A549 (cell line): ENCODE measurements at regions of chrX and their contacts with region 1.

Region 1: DNA sequence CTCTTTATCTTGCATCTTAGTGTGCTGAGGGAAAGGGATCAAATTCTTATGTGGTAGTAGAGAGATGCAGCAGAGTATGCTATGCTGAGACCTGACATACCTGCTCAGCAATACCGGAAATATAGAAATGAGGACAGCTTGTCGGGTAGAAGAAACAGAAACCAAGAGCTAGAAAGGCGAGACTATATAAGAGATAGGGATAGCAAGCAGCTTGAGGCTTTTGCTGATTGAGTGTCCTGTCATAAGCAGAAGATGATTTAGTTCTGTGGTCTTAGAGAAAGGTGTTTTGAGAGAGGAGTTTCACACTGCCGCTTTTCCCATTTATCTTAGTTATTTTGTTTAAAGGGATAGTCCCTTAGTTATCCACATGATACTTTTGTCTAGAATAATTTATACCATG is 31.7 kb downstream of the USP9X start:
- DNase-seq: no peak
- ATAC-seq: no peak
- H3K4me3 ChIP-seq: no peak overlapping the region
- H3K27ac ChIP-seq: no peak overlapping the region
- H3K4me1 ChIP-seq: peaks cover 53% of the 10 kb centered on the region
- CTCF ChIP-seq: no peak
- EP300 ChIP-seq: no peak
- POLR2A ChIP-seq: no peak
- RAD21 ChIP-seq: no peak

Region 2: DNA sequence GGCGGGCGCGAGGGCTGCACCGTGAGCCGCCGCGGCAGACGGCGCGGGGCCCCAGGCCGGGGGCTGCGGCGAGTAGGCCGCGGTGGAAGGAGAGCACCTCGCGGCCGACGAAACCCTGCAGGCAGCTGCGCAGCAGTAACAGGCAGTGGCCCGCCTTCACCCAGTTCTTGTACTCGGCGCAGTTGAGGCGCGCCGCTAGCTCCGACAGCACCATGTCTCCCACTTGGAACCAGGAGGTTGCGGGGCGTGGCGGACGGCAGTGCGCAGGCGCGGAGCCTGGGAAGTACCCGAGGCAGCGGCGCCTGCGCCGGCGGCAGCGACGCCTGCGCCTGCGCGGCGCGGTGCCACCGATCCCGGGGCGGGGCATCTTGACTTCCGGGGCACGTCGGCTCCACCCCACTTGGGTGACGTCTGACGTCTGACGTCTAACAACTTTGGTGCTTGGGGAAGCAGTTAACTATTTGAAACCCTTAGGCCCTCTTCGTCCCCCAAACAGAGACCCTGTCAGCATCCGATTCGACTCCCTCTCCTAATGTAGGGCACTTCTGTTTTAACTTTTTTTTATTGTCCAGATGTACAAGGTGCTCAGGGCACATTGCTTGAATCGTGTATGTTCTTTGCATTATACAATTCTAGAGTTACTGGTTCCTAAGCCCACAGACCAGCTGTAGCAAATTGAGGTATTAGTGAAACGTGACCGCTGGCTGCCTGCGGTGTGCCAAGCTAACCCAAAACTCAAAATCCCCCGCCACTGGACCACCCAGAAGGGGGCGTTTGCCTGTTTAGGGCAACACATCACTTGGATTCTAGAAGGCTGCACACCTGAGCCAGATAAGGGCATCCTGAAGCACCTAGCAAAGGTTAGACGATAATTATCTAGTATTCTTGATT is 469.4 kb before region 1 on chrX and contains the start of gene CXorf38:
- CTCF ChIA-PET with region 1: interaction called, 13 read pairs
- POLR2A ChIA-PET with region 1: no interaction called
- DNase-seq: peak; percentile 69 to 91
- ATAC-seq: peak; percentile 84 to 92
- H3K4me3 ChIP-seq: peak within 1 kb of the TSS; percentile 97
- H3K27ac ChIP-seq: peak within 1 kb of the TSS; percentile 86 to 96
- H3K4me1 ChIP-seq: peaks cover 19% of the 10 kb centered on the region
- CTCF ChIP-seq: no peak
- EP300 ChIP-seq: no peak
- POLR2A ChIP-seq: peak; percentile 65
- RAD21 ChIP-seq: no peak
- polyA plus RNA-seq, gene CXorf38: 12.5 and 14.3 TPM in 2 replicates

Region 3: DNA sequence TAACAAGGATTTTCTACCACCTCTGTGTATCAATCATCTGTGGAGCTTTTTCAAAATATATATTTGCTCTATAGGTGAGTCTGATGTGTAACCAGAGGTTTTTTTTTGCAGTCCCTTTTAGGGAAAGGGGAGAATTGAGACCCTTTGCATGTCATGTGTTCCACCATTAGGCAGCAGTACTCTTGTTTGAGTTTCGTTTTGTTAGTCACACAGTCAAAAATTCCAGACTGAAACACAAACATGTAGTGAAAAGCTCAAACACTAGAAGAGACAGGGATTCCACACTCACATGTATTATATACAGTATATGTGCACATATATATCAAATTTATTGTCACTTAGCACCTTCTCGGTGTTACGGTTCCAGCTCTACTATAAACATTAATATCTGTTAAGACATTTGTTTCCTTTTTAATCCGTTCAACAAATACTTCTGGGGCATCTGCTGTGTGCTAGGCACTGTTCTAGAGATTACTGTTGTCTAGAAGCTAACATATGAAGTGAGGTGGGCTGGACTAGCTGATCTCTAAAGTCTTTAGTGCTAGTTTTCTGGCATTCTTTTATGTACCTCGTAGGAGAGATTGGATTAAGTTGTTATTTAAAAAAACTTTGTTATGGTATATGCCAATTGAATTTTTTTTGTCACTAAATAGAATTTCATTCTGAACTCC is 26.2 kb before region 1 on chrX:
- CTCF ChIA-PET with region 1: interaction called, 10 read pairs
- POLR2A ChIA-PET with region 1: no interaction called
- DNase-seq: no peak
- ATAC-seq: no peak
- H3K4me3 ChIP-seq: peak overlapping the region; percentile 28
- H3K27ac ChIP-seq: 0 out of 6 replicates have a peak overlapping the region, but pooled peaks of 1 of the 2 experiments have one; percentile 48
- H3K4me1 ChIP-seq: peaks cover 59% of the 10 kb centered on the region
- CTCF ChIP-seq: no peak
- EP300 ChIP-seq: no peak
- POLR2A ChIP-seq: no peak
- RAD21 ChIP-seq: no peak

Region 4: DNA sequence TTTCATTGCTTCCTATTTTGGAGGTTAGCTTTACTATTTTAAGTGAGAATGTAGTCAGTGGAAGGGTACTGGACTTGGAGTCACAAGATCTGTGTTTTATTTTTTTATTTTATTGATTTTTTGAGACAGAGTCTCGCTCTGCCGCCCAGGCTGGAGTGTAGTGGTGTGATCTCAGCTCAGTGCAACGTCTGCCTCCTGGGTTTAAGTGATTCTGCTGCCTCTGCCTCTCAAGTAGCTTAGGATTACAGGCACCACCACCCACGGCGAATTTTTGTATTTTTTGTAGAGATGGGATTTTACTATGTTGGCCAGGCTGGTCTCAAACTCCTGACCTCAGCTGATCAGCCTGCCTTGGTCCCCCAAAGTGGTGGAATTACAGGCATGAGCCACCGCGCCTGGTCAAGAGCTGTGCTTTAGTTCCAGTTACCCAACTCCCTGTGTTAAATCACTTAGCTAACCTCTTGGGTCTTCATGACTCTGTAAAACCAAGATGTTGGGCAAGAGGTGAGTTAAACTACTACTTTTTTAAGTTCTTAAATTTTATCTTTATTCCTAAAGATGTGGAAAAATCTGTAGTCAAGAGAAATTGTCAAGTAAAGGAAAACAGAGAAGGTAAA is 20.5 kb before region 1 on chrX:
- CTCF ChIA-PET with region 1: interaction called, 10 read pairs
- POLR2A ChIA-PET with region 1: no interaction called
- DNase-seq: no peak
- ATAC-seq: no peak
- H3K4me3 ChIP-seq: no peak overlapping the region
- H3K27ac ChIP-seq: 0 out of 6 replicates have a peak overlapping the region, but pooled peaks of 1 of the 2 experiments have one; percentile 24
- H3K4me1 ChIP-seq: peaks cover 49% of the 10 kb centered on the region
- CTCF ChIP-seq: no peak
- EP300 ChIP-seq: no peak
- POLR2A ChIP-seq: no peak
- RAD21 ChIP-seq: no peak

Region 5: GRCh38 chrX:41105005-41105404 is 11.9 kb before region 1 on chrX:
- CTCF ChIA-PET with region 1: interaction called, 20 read pairs
- POLR2A ChIA-PET with region 1: no interaction called
- DNase-seq: no peak
- ATAC-seq: no peak
- H3K4me3 ChIP-seq: no peak overlapping the region
- H3K27ac ChIP-seq: no peak overlapping the region
- H3K4me1 ChIP-seq: peaks cover 29% of the 10 kb centered on the region
- CTCF ChIP-seq: no peak
- EP300 ChIP-seq: no peak
- POLR2A ChIP-seq: no peak
- RAD21 ChIP-seq: no peak

Region 6: DNA sequence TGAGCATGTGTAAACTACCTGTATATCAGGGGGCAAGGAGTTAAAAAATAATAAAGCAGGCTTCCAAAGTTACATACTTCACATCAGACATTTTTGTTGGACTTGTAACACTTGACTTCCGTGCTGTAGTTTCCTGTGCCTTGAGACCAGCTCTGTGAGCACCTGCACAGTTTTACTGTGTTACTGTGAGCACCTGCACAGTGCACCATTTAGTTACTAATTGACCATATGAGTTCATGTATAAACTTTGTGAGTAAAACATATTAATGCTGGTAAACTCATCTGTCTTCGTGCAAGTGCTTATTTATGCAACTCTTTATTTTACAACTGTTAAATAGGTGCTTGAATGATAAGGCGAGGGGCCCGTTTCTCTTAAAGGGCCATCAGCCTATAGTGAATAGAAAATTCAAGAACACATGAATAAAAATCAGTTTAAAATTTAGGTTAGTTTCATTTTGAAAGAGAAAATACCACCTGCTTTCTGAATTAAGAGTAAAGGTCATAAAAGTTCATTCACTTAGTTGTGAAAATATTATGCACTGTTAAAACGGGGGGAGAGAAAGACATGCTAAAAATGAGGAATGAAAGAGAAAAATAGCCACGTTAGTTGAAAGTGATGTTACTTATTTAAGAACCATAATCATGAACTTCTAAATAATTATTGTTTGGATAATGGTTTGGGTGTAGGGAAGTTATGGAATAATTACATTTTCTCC is 10.7 kb after region 1 on chrX:
- CTCF ChIA-PET with region 1: interaction called, 10 read pairs
- POLR2A ChIA-PET with region 1: no interaction called
- DNase-seq: no peak
- ATAC-seq: no peak
- H3K4me3 ChIP-seq: no peak overlapping the region
- H3K27ac ChIP-seq: no peak overlapping the region
- H3K4me1 ChIP-seq: peaks cover 20% of the 10 kb centered on the region; the same call in 2 of the 3 replicates
- CTCF ChIP-seq: no peak
- EP300 ChIP-seq: no peak
- POLR2A ChIP-seq: no peak
- RAD21 ChIP-seq: no peak

Region 7: GRCh38 chrX:41153448-41153847 is 36.5 kb after region 1 on chrX:
- CTCF ChIA-PET with region 1: no interaction called
- POLR2A ChIA-PET with region 1: no interaction called
- DNase-seq: no peak
- ATAC-seq: no peak
- H3K4me3 ChIP-seq: no peak overlapping the region
- H3K27ac ChIP-seq: no peak overlapping the region
- H3K4me1 ChIP-seq: peaks cover 25% of the 10 kb centered on the region
- CTCF ChIP-seq: no peak
- EP300 ChIP-seq: no peak
- POLR2A ChIP-seq: no peak
- RAD21 ChIP-seq: no peak

Region 8: GRCh38 chrX:41245641-41246040 is 128.7 kb after region 1 on chrX:
- CTCF ChIA-PET with region 1: no interaction called
- POLR2A ChIA-PET with region 1: no interaction called
- DNase-seq: no peak
- ATAC-seq: no peak
- H3K4me3 ChIP-seq: no peak overlapping the region
- H3K27ac ChIP-seq: no peak overlapping the region
- H3K4me1 ChIP-seq: no peaks in the 10 kb centered on the region
- CTCF ChIP-seq: no peak
- EP300 ChIP-seq: no peak
- POLR2A ChIP-seq: no peak
- RAD21 ChIP-seq: no peak